Motor neuron (in vitro differentiated cells): ENCODE measurements at regions of chr21 and their contacts with region 1.

Region 1: DNA sequence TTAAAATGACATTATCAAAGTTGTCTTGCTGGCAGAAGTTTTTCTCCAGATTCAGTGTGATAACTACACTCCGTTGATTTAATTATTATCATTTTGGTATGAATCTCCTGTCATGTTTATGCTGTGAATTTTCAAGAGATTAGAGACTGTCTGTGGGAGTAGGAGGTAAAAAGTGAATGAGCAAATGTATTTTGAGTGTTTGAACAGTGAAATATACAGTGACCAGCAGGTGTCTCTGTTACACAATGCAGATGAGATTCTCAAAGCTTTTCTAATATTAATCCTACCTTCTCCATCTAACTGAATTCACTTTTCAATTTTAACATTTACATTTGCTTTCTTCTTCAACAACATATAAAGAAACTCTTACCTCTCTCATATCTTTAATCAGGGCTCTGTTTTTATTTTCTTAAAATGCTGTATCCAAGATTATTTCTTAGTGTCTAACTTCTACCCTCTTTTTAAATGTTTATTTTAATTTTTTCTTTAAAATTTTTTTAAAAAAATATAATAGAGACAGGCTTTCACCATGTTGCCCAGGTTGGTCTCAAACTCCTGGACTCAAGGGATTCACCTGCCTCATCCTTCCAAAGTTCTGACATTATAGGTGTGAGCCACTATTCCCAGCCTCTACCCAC is 20.9 kb upstream of the HSPA13 start:
- ATAC-seq: peak in 3 of 8 experiments; percentile 39 to 68 (median 59)
- H3K4me3 ChIP-seq: no peak overlapping the region
- H3K27ac ChIP-seq: no peak overlapping the region
- H3K4me1 ChIP-seq: no peaks in the 10 kb centered on the region

Region 2: GRCh38 chr21:15483138-15483780 is 1079.5 kb after region 1 on chr21:
- in situ Hi-C with region 1: loop called in 2 of 9 experiments (anchors 25 kb)
- ATAC-seq: peak; percentile 99 to 100 (median 100)
- H3K4me3 ChIP-seq: no peak overlapping the region
- H3K27ac ChIP-seq: no peak overlapping the region
- H3K4me1 ChIP-seq: peaks cover 0 to 3% of the 10 kb centered on the region in 2 donors

Region 3: DNA sequence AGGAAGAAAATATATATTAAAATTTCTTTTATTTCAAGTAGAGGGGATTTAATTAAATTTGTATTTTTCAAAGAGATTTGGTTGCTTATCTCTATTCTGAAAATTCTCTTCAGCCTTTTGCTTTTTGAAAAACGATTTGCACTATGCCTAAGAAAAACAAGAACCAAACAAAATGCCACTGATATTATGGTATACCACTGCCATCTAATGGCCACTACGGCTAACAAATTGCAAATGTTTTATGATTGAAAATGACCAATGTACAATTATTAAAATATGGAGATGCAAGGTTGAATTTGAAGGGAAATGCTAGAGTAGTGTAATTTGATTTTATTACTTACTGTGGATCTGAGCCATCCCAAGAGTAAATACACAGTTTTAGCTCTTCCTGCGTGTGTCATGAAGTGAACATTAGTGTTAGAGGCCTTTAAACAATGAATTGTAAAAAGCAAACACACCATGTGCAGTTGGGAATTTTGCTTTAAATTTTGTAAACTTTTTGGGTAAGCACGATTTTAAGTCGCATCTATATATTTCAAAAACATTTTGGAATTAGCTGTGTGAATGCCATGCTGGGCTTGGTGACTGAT is 1188.6 kb after region 1 on chr21:
- in situ Hi-C with region 1: loop called in 3 of 9 experiments (anchors 25 kb)
- ATAC-seq: peak in 2 of 8 experiments; percentile 34 to 68
- H3K4me3 ChIP-seq: no peak overlapping the region
- H3K27ac ChIP-seq: no peak overlapping the region
- H3K4me1 ChIP-seq: no peaks in the 10 kb centered on the region